ENCODE measurements at regions of chr4 and their contacts with region 1.

Region 1: DNA sequence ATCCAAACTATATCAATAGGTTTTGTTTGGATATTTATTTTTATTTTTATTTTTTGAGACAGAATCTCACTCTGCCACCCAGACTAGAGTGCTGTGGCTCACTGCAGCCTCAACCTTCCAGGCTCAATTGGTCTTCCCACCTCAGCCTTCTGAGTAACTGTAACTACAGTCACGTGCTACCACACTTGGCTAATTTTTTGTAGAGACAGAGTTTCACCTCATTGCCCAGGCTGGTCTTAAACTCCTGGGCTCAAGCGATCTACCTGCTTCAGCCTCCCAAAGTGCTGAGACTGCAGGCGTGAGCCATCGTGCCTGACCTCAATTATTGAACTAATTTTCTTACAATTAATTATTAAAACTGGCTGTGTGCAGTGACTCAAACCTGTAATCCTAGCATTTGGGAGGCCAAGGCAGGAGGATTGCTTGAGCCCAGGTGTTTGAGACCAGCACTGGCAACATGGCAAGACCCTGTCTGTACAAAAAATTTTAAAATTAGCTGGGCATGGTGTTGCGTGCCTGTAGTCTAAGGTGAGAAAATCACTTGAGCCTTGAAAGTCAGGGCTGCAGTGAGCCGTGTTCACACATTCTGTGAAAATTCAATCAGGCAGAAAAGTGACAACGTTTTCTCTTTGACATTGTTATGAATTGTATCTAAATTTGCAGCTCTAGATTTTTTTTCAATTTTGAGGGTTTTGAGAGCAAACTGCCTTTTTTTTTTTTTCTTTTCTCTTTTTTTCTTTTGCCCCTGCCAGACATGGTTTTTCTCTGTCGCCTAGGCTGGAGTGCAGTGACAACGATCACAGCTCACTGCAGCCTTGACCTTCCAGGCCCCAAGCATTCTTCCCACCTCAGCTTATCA is 66.0 kb downstream of the UBE2K start:
- DNase-seq: no peak
- ATAC-seq: no peak
- H3K4me3 ChIP-seq: no peak overlapping the region
- H3K27ac ChIP-seq: no peak overlapping the region
- H3K4me1 ChIP-seq: peaks cover 0 to 5% (median 0%) of the 10 kb centered on the region in 9 donors
- H3K27me3 ChIP-seq: no peaks in the 10 kb centered on the region
- CTCF ChIP-seq: no peak

Region 2: DNA sequence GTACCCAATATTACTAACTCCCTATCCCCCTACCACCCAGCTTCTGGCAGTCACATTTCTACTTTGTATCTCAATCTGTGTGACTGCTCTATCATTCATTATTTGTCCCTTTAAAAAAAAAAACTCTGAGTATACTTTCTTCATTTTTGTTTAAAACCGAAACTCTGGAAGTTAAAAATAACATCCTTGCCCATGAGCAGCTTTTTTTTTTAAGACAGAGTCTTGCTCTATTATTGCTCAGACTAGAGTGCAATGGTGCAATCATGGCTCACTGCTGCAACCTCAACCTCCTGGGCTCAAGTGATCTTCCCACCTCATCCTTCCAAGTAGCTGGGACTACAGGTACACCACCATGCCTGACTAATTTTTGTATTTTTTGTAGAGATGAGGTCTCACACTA is 50.3 kb before region 1 on chr4:
- intact Hi-C with region 1: loop called in 1 of 10 experiments (anchors 10 kb)
- DNase-seq: no peak
- ATAC-seq: peak in 4 of 8 donors; percentile 26 to 53 (median 36)
- H3K4me3 ChIP-seq: no peak overlapping the region
- H3K27ac ChIP-seq: peak overlapping the region in 1 of 10 donors; percentile 24
- H3K4me1 ChIP-seq: peaks cover 4 to 75% (median 29%) of the 10 kb centered on the region in 9 donors
- H3K27me3 ChIP-seq: no peaks in the 10 kb centered on the region
- CTCF ChIP-seq: no peak

Region 3: DNA sequence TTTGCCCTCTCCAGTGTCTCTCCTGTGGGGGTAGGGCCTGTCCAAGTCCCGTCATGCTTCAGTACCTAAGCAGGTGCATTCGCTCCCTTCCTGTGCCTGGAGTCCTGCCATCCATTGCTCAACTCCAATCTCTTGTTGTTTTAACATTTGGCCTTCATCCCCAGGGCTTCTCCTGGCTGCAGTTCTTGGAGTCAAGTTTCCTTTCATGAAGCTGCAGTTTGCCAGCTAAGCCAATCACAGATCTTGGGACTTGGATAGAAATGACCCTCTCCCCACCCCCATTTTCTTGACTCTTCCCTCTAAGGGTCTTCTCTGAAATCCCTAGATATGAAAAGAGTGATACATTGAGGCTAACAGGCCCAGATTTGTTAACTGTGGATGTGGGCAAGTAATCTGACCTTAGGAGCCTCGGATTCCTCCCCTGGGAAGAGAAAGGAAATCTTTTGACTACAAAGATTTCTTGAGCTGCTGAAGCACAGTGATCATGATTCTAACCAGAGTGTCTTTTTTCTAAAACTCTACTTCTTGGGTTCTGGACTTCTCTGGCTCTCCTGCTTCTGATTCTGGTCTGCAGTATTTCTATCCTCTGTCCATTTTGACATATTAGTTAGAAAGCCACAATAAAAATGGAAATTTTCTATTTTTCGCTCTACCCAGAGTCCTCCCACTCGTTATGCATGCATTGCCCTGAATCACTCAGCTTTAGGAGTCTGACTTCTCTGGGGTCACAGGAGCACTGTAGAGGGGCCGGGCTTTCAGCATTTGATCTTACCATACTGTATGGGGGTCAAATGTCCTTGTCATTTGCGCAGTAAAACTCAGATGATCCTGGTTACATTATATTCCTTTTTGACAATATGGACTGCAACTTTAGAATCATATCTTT is 632.2 kb after region 1 on chr4:
- intact Hi-C with region 1: loop called in 1 of 10 experiments (anchors 5 kb)
- DNase-seq: peak; percentile 36 to 42
- ATAC-seq: peak in 7 of 8 donors; percentile 33 to 74 (median 56)
- H3K4me3 ChIP-seq: no peak overlapping the region
- H3K27ac ChIP-seq: no peak overlapping the region
- H3K4me1 ChIP-seq: peaks cover 0 to 19% (median 8%) of the 10 kb centered on the region in 9 donors
- H3K27me3 ChIP-seq: no peaks in the 10 kb centered on the region
- CTCF ChIP-seq: no peak

Measured in heart right ventricle (tissue), 16 donors.